Sciatic nerve (tissue), 2 donors: ENCODE measurements at regions of chr20 and their contacts with region 1.

Region 1: GRCh38 chr20:46512943-46513844 is at the start of gene ZNF334:
- DNase-seq: peak; percentile 70
- ATAC-seq: peak; percentile 90
- total RNA-seq, gene ZNF334: 9.0 TPM

Region 2: GRCh38 chr20:45823949-45824835 is 689.0 kb before region 1 on chr20:
- intact Hi-C with region 1: loop called (anchors 10 kb)
- DNase-seq: peak; percentile 63
- ATAC-seq: peak; percentile 41